GM13977 (cell line): ENCODE measurements at regions of chr2 and their contacts with region 1.

Region 1: DNA sequence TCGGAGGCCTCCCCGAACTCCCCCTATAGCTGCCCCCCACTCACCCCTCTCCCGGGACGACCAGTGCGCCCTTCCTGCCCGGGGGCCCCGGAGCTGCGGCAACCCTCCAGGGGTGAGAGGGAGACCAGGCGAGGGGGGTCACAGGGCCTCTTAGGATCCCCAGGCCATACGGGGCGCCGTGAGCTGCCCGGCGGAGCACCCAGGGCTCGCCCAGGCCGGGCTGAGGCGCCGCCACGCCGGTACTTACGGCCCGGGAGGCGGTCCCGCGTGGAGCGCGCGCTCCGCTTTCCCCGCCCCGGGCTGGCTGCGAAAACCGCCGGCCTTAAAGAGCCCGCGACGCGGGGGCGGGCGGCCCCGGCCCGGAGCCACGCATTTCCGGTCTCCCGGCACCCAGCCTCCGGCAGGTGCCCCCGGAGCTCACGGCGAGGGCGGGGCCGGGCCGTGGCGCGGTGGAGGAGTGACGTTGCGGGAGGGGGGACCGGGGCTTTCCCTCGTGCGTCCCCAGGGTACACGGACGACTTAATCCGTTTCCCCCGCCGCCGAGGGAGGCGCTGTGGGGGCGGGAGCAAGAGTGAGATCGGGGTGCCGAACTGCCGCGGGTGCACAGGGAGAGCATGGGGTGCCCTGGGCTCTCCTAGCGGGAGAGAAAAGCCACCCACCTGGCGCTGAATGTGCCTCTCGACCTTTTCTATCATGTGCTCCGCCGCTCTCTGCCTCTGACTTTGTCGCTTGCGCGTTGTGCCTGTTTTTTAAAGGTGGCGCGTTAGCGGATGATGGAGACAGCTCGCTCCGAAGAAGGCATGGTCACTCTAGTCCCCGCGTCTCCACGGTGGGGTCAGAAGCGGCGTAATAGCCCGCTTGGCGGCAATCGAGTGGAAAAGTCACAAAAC is at the start of gene METTL21A:
- DNase-seq: peak; percentile 98
- CTCF ChIP-seq: peak; percentile 64

Region 2: DNA sequence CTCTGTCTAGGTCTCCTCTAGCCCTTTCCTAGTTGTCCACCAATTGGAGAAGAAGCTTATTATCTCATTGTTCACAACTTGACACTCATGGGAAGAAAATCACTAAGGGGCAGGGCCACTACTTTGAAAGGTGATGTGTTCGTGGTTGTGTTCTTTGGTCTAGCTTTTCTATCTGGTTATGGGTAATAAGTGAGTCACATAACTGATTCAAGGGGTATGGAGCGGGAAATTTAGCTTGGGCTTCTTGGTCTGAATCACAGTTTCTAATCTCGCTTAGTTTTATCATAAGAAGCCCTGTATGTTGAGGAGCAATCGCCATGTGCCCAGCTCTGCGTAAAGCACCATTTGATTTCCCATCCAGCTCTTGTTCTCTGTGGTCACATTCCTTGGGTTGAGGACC is 888.3 kb before region 1 on chr2:
- in situ Hi-C with region 1: no loop called
- DNase-seq: no peak
- CTCF ChIP-seq: no peak

Region 3: GRCh38 chr2:207375192-207375861 is 249.9 kb before region 1 on chr2:
- in situ Hi-C with region 1: no loop called
- DNase-seq: no peak
- CTCF ChIP-seq: no peak

Region 4: GRCh38 chr2:207584952-207585351 is 40.3 kb before region 1 on chr2:
- in situ Hi-C with region 1: no loop called
- DNase-seq: no peak
- CTCF ChIP-seq: no peak

Region 5: GRCh38 chr2:207746131-207746530 is 120.9 kb after region 1 on chr2:
- in situ Hi-C with region 1: no loop called
- DNase-seq: peak; percentile 65
- CTCF ChIP-seq: peak; percentile 92

Region 6: GRCh38 chr2:208033758-208034502 is 408.7 kb after region 1 on chr2:
- in situ Hi-C with region 1: loop called (anchors 10 kb)
- DNase-seq: peak; percentile 58
- CTCF ChIP-seq: peak; percentile 73